Heart left ventricle (tissue), 16 donors: ENCODE measurements at regions of chr11 and their contacts with region 1.

Region 1: DNA sequence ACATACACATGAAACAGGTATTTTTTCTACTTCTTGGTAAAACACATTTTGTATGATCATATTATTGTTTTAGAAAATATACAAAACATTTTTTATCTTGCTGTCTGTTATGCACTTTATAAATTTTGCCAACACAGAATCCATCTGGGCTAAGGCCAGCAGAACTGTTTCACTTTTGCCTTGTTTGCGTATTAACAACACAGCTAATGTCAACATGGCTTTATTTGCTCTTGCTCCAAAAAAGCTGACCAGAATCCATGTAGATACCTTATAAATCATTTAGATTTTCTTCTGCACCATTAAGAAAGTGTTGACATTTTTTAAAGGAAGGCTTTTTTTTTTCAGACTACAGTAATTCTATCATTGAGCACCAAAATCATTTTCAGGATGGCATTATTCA is 58.1 kb upstream of the PGR start:
- DNase-seq: no peak
- ATAC-seq: no peak
- H3K4me3 ChIP-seq: no peak overlapping the region
- H3K27ac ChIP-seq: peak overlapping the region in 3 of 12 donors; percentile 5 to 22 (median 8)
- H3K4me1 ChIP-seq: peaks cover 0 to 9% (median 0%) of the 10 kb centered on the region in 12 donors
- H3K27me3 ChIP-seq: no peaks in the 10 kb centered on the region
- CTCF ChIP-seq: no peak
- POLR2A ChIP-seq: no peak

Region 2: DNA sequence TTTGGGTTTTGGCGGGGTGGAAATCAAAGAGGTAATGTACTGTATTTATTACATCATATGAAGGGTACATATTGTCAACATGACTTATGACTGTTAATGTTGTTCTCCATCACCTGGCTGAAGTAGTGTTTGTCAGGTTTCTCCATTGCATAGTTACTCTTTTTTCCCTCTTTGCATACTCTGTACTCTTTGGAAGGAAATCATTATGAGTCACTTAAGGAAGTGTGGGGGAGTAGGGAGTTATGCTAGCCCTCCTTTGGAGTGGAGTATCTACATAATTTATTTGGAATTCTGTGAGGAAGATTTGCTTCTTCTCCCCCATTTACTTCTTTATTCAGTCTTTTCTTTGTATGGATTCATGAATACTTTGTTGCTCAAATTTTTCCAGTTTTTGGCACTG is 54.6 kb before region 1 on chr11:
- intact Hi-C with region 1: loop called in 1 of 10 experiments (anchors 10 kb)
- DNase-seq: no peak
- ATAC-seq: no peak
- H3K4me3 ChIP-seq: no peak overlapping the region
- H3K27ac ChIP-seq: no peak overlapping the region
- H3K4me1 ChIP-seq: peaks cover 0 to 14% (median 1%) of the 10 kb centered on the region in 12 donors
- H3K27me3 ChIP-seq: peaks cover 0 to 21% (median 0%) of the 10 kb centered on the region in 9 donors
- CTCF ChIP-seq: no peak
- POLR2A ChIP-seq: no peak

Region 3: GRCh38 chr11:101241160-101241795 is 53.5 kb after region 1 on chr11:
- intact Hi-C with region 1: no loop called
- DNase-seq: peak in 1 of 5 donors; percentile 51
- ATAC-seq: peak in 1 of 4 donors; percentile 42
- H3K4me3 ChIP-seq: no peak overlapping the region
- H3K27ac ChIP-seq: no peak overlapping the region
- H3K4me1 ChIP-seq: peaks cover 0 to 4% (median 0%) of the 10 kb centered on the region in 12 donors
- H3K27me3 ChIP-seq: no peaks in the 10 kb centered on the region
- CTCF ChIP-seq: no peak
- POLR2A ChIP-seq: no peak

Region 4: DNA sequence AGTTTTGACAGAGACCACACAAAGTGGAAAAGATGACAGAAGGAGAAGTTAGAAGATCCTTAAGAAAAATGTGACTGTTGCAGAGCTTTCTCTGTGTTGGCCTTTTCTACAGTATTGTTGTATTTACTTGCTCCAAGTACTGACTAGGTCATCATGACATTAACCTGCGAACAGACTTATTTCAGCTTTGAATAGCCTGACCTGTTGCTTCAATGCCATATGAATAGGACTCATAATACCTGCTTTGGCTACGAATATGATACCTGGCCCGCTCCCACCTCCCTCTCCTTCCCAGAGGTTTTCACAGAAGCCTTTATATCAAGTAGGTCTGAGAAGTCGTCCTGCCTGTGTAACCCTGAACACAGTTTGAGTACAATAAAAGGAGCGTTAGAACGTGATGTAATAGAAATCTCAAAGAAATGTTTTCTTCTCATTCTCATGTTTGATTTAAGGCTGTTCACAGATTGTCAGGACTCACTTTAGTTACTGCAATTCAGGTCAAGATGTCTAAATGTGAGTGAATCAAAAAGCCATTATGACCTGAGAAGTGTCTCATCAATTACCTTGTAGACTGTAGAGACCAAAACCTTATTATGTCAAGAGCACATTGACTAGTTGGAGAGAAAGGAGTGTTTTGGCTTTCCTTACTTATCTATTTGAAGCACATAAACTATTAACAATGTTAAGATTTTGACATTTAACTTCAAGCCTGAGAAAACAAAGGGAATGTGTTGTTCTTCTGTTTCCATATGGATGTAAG is 111.6 kb after region 1 on chr11:
- intact Hi-C with region 1: no loop called
- DNase-seq: no peak
- ATAC-seq: no peak
- H3K4me3 ChIP-seq: no peak overlapping the region
- H3K27ac ChIP-seq: no peak overlapping the region
- H3K4me1 ChIP-seq: no peaks in the 10 kb centered on the region
- H3K27me3 ChIP-seq: no peaks in the 10 kb centered on the region
- CTCF ChIP-seq: no peak
- POLR2A ChIP-seq: no peak

Region 5: GRCh38 chr11:102527701-102528100 is 1340.0 kb after region 1 on chr11:
- intact Hi-C with region 1: loop called in 1 of 10 experiments (anchors 5 kb)
- DNase-seq: no peak
- ATAC-seq: no peak
- H3K4me3 ChIP-seq: no peak overlapping the region
- H3K27ac ChIP-seq: no peak overlapping the region
- H3K4me1 ChIP-seq: no peaks in the 10 kb centered on the region
- H3K27me3 ChIP-seq: peaks cover 0 to under 1% (median 0%) of the 10 kb centered on the region in 9 donors
- CTCF ChIP-seq: no peak
- POLR2A ChIP-seq: no peak